Cardiac septum (tissue), 1 donor: ENCODE measurements at regions of chr2 and their contacts with region 1.

Region 1: DNA sequence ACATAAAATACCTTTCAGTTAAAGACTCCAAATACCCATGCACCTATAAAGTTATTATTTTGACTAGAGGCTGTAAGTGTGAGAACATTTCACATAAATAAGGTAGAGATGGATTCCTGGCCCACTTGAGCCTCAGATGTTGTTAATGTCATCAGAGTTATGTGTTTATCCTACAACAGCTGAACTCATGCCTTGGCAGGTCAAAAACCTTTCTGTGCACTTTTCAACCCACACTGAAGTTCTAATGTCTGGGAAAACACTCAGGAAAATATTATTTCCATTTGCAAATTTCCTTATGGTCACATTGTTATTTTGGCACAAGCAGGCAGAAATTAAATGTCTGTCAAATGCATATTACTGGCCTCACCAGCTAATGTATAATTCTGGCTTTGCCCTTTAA is 209.2 kb downstream of the LNPK start:
- DNase-seq: no peak

Region 2: DNA sequence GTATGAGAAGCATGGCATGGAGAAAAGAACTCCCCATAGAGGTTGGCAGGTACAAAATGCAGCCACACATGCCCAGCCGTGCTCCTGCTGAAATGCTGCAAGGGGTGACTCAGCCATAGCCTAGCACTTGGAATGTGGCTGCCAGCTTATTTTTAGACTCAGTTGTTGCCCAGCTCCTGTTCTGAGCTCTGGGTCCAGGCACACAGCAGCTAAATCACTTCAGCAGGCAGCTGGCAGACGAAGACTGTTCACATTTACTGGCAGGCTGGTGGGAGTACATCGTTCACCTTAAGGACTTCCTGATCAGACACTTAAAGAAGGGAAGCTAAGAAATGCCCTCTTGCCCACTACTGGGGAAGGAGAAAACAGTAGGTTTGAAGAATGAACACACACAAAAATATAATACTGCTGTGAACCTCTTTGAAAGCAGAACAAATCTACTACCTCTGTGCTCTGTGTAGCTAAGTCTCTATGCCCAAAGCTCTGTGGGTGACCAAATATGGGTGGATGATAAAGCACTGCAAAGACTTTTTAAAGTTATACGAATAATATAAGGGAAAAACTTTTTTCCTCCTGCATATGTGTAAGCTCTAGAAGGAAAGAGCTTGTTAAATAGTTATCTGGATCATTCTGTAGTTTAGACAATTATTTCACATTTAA is 63.0 kb after region 1 on chr2:
- intact Hi-C with region 1: loop called (anchors 2 kb)
- DNase-seq: peak; percentile 79

Region 3: DNA sequence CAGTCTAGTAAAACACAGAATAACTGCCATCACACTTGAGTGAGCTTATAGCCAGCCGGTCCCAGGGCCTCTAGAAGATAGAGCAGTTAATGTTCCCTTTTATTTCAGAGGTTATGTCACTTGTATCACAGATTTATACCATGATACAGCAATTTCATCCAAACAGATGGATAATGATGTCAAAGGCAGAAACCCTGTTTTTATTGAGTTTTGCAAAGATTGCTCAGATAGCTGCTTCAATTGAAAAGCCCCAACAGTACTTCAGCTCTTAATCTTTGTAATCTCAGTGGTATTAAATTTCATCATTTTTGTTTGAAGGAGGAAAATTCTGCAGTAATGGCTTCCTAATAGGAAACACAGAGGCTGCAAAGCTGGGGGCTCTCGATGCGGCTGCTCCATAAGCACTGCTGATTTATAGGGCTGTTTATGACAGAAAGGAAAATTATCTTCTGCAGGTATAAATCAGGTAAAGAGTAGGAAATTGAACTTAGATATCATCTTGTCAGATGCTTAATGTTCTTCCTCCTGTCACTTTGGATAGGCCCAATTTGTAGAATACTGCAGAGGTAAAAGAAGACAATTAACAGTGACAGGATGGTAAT is 96.9 kb after region 1 on chr2:
- intact Hi-C with region 1: loop called (anchors 10 kb)
- DNase-seq: no peak